ENCODE measurements at regions of chr14 and their contacts with region 1.

Region 1: DNA sequence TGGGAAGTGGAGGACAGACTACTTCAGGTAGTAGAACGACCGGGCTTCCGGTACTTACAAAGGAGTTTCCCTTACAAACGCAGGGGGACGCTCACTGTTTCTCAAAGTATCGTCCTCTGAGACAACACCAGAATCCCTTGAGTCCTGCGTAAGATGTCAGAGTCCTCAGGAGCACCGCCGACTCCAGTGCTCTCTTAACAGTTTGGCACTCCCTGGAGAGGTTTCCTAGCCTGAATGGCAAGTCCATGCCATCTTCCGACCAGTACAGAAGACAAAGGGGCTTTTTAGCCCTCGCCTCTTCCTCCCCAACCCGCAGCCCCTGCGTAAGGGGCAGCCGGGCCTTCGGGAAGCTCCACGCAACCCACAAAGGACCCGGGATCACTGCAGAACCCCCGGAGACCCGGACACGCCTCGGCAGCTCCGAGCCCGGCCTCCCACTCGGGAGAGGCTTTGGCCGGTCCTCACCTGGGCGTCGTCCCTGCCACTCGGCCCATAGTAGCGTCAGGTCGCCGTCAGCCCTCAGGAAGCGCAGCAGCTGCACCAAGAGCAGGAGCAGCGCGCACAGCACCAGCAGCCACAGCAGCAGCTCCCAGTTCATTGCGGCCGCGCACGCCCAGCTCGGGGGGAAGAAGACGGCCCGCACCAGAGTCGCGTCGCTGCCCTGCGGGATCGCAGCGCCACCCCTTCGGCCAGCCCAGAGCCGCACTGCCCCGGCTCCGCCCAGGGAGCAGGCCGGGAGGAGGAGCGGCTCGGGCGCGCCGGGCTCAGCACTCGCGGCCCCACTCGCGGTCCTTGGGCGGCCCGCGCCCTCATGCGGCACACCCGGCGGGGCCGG is at the start of gene DHRS7:
- DNase-seq: peak; percentile 70
- ATAC-seq: peak; percentile 88
- H3K4me3 Mint-ChIP-seq: peak within 1 kb of the TSS; percentile 99
- H3K27ac Mint-ChIP-seq: peak within 1 kb of the TSS; percentile 99
- H3K4me1 Mint-ChIP-seq: peaks cover 39% of the 10 kb centered on the region
- H3K27me3 Mint-ChIP-seq: no peaks in the 10 kb centered on the region
- CTCF ChIP-seq: no peak
- total RNA-seq, gene DHRS7: 41.5 and 47.1 TPM in 2 replicates

Region 2: DNA sequence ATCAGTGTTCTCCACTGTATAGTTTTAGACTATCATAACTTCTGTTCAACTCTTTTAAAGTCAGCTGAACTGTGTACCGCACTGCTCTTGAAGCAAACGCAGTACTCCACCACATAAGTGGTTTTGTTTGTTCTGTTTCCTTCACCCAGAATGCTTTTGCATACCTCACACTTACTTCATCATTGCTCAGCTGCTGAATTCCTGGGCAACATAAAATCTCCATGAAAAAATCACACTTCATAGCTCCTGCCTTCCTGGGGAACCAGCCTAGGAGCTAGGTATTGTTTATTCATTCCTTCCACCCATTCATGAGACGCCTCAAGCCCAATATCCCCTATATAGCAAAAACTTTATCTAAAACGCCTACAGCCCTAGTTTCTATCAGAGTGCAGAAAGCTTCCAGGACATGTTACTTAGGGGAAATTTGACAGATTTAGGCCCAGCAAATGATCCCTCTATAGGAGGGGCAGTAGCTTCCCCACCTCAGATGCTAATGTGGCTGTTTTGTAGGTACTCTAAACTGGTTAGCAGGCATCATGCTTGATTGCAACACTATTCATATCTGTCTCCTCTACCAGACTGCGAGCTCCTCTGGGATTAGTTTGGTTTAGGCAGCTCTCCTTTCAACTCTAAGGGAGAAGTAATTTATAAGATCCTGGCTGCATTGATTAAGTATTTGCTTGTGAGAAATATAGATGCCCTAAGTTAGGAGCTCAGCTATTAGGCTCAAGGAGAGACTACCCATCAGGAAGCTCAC is 200.5 kb before region 1 on chr14:
- CTCF ChIA-PET with region 1: interaction called, 5 read pairs
- POLR2A ChIA-PET with region 1: interaction called, 3 read pairs
- intact Hi-C with region 1: loop called (anchors 1 kb)
- DNase-seq: no peak
- ATAC-seq: peak; percentile 25
- H3K4me3 Mint-ChIP-seq: peak overlapping the region; percentile 86
- H3K27ac Mint-ChIP-seq: peak overlapping the region; percentile 93
- H3K4me1 Mint-ChIP-seq: peaks cover 14% of the 10 kb centered on the region
- H3K27me3 Mint-ChIP-seq: no peaks in the 10 kb centered on the region
- CTCF ChIP-seq: no peak

Region 3: GRCh38 chr14:60064491-60065072 is 100.3 kb before region 1 on chr14:
- CTCF ChIA-PET with region 1: interaction called, 9 read pairs
- POLR2A ChIA-PET with region 1: interaction called, 4 read pairs
- intact Hi-C with region 1: loop called (anchors 1 kb)
- DNase-seq: no peak
- ATAC-seq: peak; percentile 57
- H3K4me3 Mint-ChIP-seq: no peak overlapping the region
- H3K27ac Mint-ChIP-seq: no peak overlapping the region
- H3K4me1 Mint-ChIP-seq: no peaks in the 10 kb centered on the region
- H3K27me3 Mint-ChIP-seq: peaks cover 4% of the 10 kb centered on the region
- CTCF ChIP-seq: peak; percentile 54

Region 4: GRCh38 chr14:60151715-60152114 is 13.2 kb before region 1 on chr14:
- CTCF ChIA-PET with region 1: interaction called, 3 read pairs
- POLR2A ChIA-PET with region 1: interaction called, 6 read pairs
- intact Hi-C with region 1: loop called (anchors 1 kb)
- DNase-seq: no peak
- ATAC-seq: peak; percentile 98
- H3K4me3 Mint-ChIP-seq: no peak overlapping the region
- H3K27ac Mint-ChIP-seq: peak overlapping the region; percentile 81
- H3K4me1 Mint-ChIP-seq: peaks cover 19% of the 10 kb centered on the region
- H3K27me3 Mint-ChIP-seq: no peaks in the 10 kb centered on the region
- CTCF ChIP-seq: no peak

Region 5: GRCh38 chr14:60195179-60195810 is 30.4 kb after region 1 on chr14:
- CTCF ChIA-PET with region 1: no interaction called
- POLR2A ChIA-PET with region 1: no interaction called
- intact Hi-C with region 1: no loop called
- DNase-seq: no peak
- ATAC-seq: no peak
- H3K4me3 Mint-ChIP-seq: no peak overlapping the region
- H3K27ac Mint-ChIP-seq: no peak overlapping the region
- H3K4me1 Mint-ChIP-seq: no peaks in the 10 kb centered on the region
- H3K27me3 Mint-ChIP-seq: peaks cover 1% of the 10 kb centered on the region
- CTCF ChIP-seq: no peak